Activated naive CD4-positive, alpha-beta T cell treated with anti-CD3 and anti-CD28 coated beads for 36 hours (primary cell): ENCODE measurements at regions of chr11 and their contacts with region 1.

Region 1: GRCh38 chr11:81963018-81963417 is 770.6 kb downstream of the FAM181B start:
- DNase-seq: no peak
- H3K4me3 Mint-ChIP-seq: no peak overlapping the region
- H3K27ac Mint-ChIP-seq: no peak overlapping the region
- H3K4me1 Mint-ChIP-seq: peaks cover 20% of the 10 kb centered on the region
- H3K27me3 Mint-ChIP-seq: no peaks in the 10 kb centered on the region

Region 2: GRCh38 chr11:82003671-82004515 is 40.9 kb after region 1 on chr11:
- CTCF ChIA-PET with region 1: no interaction called
- intact Hi-C with region 1: loop called (anchors 2 kb)
- DNase-seq: peak; percentile 30
- H3K4me3 Mint-ChIP-seq: no peak overlapping the region
- H3K27ac Mint-ChIP-seq: peak overlapping the region; percentile 44
- H3K4me1 Mint-ChIP-seq: peaks cover 25% of the 10 kb centered on the region
- H3K27me3 Mint-ChIP-seq: peaks cover 2% of the 10 kb centered on the region